ENCODE measurements at regions of chr9 and their contacts with region 1.

Region 1: DNA sequence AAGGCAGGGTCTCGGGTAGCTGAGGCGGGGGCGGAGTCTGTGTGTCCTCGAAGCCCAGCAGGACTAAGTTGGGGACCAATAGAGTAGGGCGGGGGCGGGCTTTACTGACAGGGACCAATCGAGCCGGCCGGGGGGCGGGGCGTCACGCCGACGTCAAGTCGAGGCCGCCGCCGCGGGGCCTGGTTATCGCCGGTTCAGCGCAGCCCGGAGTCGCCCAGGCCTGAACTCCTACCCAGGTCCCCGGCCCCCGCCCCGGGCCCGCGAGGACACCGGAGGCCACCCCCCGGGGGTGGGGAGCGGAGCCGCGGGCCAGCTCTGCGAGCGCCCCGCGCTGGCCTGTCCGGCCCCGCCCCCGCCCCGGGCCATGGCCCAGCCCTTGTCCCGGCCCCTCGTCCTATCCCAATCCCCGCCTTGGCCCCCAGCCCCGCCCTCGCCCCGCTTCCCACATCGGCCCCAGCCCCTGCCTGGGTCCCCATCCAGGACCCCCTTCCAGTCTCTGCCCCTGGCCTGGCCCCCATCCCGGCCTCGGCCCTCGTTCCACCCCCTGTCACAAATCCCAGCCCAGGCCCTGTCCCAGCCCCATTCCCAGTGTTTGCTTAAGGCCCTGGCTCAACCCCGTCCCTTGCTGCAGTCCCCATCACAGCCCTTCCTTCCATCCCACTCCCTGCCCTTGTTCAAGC is at the start of gene TMEM8B:
- DNase-seq: peak; percentile 83
- ATAC-seq: peak; percentile 94
- H3K4me3 ChIP-seq: peak within 1 kb of the TSS; percentile 91
- H3K27ac ChIP-seq: peak within 1 kb of the TSS; percentile 85
- H3K4me1 ChIP-seq: peaks cover 8% of the 10 kb centered on the region
- H3K27me3 ChIP-seq: no peaks in the 10 kb centered on the region
- CTCF ChIP-seq: no peak
- POLR2A ChIP-seq: 0 out of 2 replicates have a peak, but pooled peaks have one; percentile 31
- RAD21 ChIP-seq: no peak
- total RNA-seq, gene TMEM8B: 0.56 and 0.72 TPM in 2 replicates

Region 2: DNA sequence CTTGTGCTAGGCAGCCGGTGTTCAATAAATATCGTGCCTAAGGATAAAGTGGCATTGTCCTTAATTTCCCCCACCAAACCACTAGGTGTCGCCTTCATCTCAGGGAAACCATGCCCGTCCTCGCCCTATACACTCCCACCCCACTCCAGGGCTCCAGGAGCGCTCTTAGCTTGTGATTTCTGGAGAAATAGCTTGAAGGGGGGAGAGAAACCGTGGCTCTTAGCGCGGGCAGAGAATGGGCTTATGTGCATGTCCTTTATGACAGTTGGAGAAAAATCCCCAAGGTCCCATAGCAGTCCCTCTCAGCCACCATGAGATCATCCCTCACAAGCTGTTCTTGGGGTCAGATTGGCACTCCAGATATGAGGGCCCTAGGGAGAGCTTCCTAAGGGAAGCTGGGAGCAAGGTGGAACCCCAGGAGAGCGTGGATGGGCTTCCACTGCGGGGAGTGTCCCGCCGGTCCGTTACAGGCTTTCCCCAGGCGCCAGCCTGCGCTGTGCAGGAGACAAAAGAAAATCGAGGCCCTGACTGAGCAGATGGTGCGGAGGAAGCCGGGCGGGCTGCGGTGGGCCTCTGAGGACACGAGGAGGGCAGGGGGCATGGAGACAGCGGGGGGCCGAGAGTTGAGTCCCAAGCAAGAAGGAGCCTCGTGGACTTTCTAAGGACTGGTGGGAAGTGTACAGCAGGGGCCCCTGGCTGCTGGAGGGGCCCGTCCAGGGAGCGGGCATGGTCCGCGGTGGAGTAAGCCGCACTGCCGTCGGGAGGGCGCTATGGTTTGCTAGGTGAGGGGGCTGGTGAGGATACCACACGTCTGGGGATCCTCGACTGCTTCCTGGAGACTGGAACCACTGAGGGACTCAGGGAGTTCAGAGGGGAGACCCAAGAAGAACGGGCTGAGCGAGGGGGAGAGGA is 38.6 kb before region 1 on chr9:
- CTCF ChIA-PET with region 1: interaction called, 16 read pairs
- POLR2A ChIA-PET with region 1: no interaction called
- dilution Hi-C with region 1: no loop called
- in situ Hi-C with region 1: no loop called
- intact Hi-C with region 1: loop called (anchors 1 kb)
- DNase-seq: peak; percentile 83
- ATAC-seq: peak; percentile 85
- H3K4me3 ChIP-seq: no peak overlapping the region
- H3K27ac ChIP-seq: peak overlapping the region; percentile 68
- H3K4me1 ChIP-seq: peaks cover 28% of the 10 kb centered on the region
- H3K27me3 ChIP-seq: peaks cover 5% of the 10 kb centered on the region
- CTCF ChIP-seq: peak; percentile 97
- POLR2A ChIP-seq: peak; percentile 47; the same call in 1 of the 2 replicates
- RAD21 ChIP-seq: peak; percentile 99

Region 3: GRCh38 chr9:35844716-35845270 is 15.6 kb after region 1 on chr9:
- CTCF ChIA-PET with region 1: interaction called, 3 read pairs
- POLR2A ChIA-PET with region 1: no interaction called
- dilution Hi-C with region 1: no loop called
- in situ Hi-C with region 1: no loop called
- intact Hi-C with region 1: loop called (anchors 2 kb)
- DNase-seq: peak; percentile 94
- ATAC-seq: peak; percentile 51
- H3K4me3 ChIP-seq: no peak overlapping the region
- H3K27ac ChIP-seq: peak overlapping the region; percentile 81
- H3K4me1 ChIP-seq: peaks cover 20% of the 10 kb centered on the region
- H3K27me3 ChIP-seq: no peaks in the 10 kb centered on the region
- CTCF ChIP-seq: no peak
- POLR2A ChIP-seq: no peak
- RAD21 ChIP-seq: no peak

Region 4: DNA sequence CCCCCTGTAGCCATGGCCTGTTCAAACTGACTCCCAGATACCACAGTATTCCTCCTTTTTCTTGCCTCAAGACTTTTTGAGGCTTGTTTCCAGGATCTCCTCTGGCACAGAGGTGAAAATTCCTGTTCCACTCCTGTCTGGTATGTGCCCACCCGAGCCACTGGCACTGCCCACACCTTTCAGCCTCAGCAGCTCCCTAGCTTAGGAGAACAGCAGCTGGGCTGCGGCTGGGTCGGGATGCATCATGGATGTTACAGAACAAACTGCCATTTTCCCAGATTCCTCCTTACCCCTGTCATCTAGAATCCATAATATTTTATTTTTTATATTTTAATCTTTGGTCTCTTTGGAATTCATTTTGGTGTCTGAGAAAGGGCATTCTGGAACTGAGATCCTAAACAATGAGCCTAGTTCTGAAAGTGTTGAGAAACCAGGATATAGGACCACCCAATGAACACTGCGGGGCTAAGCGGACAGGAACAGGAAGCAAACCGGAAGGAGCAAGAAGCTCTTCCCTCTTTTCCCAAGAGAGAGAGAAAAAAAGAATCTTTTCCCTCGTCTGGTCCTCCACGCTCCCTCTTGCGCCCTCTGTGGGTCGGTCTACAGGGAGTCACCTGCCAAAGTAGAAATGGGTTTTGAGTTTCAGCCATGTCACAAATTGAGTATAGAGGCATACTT is 116.3 kb after region 1 on chr9:
- CTCF ChIA-PET with region 1: interaction called, 7 read pairs
- POLR2A ChIA-PET with region 1: no interaction called
- dilution Hi-C with region 1: no loop called
- in situ Hi-C with region 1: no loop called
- intact Hi-C with region 1: loop called (anchors 1 kb)
- DNase-seq: peak; percentile 85
- ATAC-seq: peak; percentile 90
- H3K4me3 ChIP-seq: no peak overlapping the region; the same call in 1 of the 2 replicates
- H3K27ac ChIP-seq: peak overlapping the region; percentile 39
- H3K4me1 ChIP-seq: peaks cover 9% of the 10 kb centered on the region
- H3K27me3 ChIP-seq: no peaks in the 10 kb centered on the region
- CTCF ChIP-seq: peak; percentile 90
- POLR2A ChIP-seq: no peak
- RAD21 ChIP-seq: peak; percentile 84

Measured in IMR-90 (cell line).